Left ventricle myocardium superior (tissue), 1 donor: ENCODE measurements at regions of chr19 and their contacts with region 1.

Region 1: DNA sequence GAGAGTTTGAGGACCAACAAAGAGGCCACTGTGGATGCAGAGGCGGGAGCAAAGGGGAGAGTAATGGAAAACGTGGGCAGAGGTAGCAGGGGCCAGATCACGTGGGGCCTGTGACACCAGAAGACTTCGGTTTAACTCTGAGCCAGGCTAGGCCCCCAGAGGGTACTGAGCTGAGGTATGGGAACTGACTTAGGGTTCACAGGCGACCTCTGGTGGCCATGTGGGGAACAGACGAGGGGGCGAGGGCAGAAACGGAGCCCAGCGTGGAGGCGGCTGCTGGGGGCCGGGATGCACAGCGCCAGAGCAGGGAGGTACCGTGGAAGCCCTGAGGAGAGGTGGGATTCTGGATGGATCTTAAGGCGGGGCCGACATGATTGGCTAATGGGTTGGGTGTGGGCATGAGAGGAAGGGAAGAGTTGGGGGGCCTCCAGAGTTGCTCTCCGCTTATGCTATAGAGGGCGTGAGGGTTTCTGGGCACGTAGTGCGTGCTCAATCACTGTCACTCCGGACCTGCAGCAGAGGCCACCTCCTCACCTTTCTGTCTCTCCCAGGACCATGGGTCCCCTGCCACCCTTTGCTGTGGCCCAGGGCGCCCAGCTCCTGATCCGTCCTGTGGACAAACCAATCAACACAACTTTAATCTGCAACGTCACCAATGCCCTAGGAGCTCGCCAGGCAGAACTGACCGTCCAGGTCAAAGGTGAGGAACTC is 13.7 kb downstream of the PVR start:
- DNase-seq: peak; percentile 80
- ATAC-seq: peak; percentile 75

Region 2: DNA sequence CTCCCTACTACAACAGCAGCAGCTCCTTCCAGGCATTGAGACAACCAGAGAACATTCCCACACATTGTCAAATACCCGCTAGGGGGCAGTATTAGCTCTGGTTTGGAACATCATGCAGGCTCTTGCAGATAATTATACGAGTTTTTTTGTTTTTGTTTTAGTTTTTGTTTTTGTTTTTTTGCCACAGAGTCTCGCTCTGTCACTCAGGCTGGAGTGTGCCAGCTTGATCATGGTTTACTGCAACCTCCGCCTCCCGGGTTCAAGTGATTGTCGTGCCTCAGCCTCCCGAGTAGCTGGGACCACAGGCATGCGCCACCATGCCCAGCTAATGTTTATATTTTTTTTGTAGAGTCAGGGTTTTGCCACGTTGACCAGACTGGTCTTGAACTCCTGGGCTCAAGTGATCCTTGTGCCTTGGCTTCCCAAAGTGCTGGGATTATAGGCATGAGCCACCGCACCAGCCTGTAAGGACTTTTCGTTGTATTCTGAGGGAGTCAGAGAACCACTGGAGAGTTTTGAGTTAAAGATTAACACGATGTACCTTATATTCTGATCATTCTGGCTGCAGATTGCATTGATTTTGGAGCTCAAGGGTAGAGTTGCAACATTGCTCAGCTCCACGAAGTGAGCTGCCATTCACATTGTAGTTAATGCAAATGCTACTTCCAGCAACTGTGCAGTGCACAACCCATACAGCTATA is 86.2 kb before region 1 on chr19:
- intact Hi-C with region 1: loop called (anchors 5 kb)
- DNase-seq: no peak
- ATAC-seq: peak; percentile 79